H1 (cell line): ENCODE measurements at regions of chr6 and their contacts with region 1.

Region 1: DNA sequence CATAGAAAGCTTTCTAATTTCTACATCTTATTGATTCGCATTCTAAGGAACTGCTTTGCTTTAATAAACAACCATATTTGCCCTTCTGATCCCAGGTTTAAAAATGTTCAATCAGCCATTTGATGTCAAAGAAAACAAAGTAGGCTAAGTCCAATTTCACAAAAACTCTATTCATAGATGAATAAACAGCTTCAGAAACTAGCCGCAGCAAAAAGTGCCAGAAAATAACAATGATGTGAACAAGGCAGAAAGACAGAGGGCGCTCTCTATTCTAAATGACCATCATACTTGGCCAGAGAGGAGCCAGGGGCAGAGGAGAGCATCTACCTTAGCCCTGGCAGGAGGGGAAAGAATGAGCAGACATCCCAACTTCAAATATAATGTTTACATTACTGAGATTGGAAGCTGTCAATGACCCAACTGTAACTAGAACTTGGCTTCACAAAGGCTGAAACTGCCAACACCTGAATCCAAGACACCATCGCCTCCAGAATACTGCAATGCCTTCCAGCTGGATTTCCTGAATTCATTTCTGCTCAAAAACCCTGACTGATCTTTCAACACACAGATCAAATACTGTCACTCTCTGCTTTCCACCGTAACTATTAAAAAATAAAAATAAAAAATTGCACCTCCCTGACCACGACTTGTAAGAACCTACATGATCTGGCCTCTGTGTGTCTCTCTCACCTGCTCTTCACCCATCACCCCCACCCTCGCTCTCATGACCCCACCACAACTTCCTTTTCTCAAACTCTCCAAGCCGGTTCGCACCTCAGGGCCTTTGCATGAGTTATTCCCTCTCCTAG is 9.5 kb downstream of the CNKSR3 start:
- DNase-seq: no peak
- H3K4me3 ChIP-seq: no peak overlapping the region
- H3K27ac ChIP-seq: no peak overlapping the region
- H3K4me1 ChIP-seq: peaks cover 0 to 5% (median 2%) of the 10 kb centered on the region in 4 experiments; a peak in 2 of 7 replicates
- H3K27me3 ChIP-seq: peaks cover 8 to 28% (median 22%) of the 10 kb centered on the region in 4 experiments
- CTCF ChIP-seq: peak in 2 of 3 experiments; percentile 71; a peak in 3 of 4 replicates
- EP300 ChIP-seq: no peak
- POLR2A ChIP-seq: no peak
- RAD21 ChIP-seq: peak; percentile 59 to 71

Region 2: GRCh38 chr6:153966001-153966400 is 535.0 kb before region 1 on chr6:
- CTCF ChIA-PET with region 1: no interaction called
- POLR2A ChIA-PET with region 1: no interaction called
- DNase-seq: no peak
- H3K4me3 ChIP-seq: no peak overlapping the region
- H3K27ac ChIP-seq: no peak overlapping the region
- H3K4me1 ChIP-seq: no peaks in the 10 kb centered on the region
- H3K27me3 ChIP-seq: no peaks in the 10 kb centered on the region
- CTCF ChIP-seq: no peak
- EP300 ChIP-seq: no peak
- POLR2A ChIP-seq: no peak
- RAD21 ChIP-seq: no peak

Region 3: GRCh38 chr6:154478021-154478700 is 22.8 kb before region 1 on chr6:
- CTCF ChIA-PET with region 1: interaction called, 11 read pairs
- POLR2A ChIA-PET with region 1: no interaction called
- DNase-seq: no peak
- H3K4me3 ChIP-seq: no peak overlapping the region
- H3K27ac ChIP-seq: no peak overlapping the region
- H3K4me1 ChIP-seq: peaks cover 0 to 6% (median 0%) of the 10 kb centered on the region in 4 experiments; a peak in 3 of 7 replicates
- H3K27me3 ChIP-seq: no peaks in the 10 kb centered on the region
- CTCF ChIP-seq: no peak
- EP300 ChIP-seq: no peak
- POLR2A ChIP-seq: no peak
- RAD21 ChIP-seq: no peak

Region 4: DNA sequence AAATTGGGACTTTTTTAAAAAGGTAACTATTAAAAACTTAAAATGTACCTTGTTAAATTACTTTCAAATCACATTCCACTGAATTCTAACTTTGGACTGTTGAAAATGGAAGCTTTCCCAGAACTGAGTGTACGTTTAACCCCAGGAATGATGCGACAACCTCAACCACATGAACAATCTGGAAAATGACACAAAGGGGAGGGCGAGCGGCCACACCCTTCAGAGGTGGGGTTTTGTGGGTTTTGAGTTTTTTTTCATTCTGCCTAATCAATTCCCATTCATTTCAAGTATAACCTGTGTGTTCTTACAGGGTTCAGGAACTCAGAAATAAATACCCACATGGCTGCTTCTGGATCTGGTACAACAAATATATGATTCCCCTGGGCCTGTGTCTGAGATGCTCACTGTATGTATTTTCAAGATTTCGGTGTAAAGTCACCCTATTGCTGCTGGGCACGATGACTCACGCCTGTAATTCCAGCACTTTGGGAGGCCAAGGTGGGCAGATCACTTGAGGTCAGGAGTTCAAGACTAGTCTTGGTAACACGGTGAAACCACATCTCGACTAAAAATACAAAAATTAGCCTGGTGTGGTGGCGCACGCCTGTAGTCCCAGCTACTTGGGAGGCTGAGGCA is 12.1 kb before region 1 on chr6:
- CTCF ChIA-PET with region 1: interaction called, 29 read pairs
- POLR2A ChIA-PET with region 1: interaction called, 3 read pairs
- DNase-seq: no peak
- H3K4me3 ChIP-seq: no peak overlapping the region
- H3K27ac ChIP-seq: no peak overlapping the region
- H3K4me1 ChIP-seq: no peaks in the 10 kb centered on the region
- H3K27me3 ChIP-seq: no peaks in the 10 kb centered on the region
- CTCF ChIP-seq: no peak
- EP300 ChIP-seq: no peak
- POLR2A ChIP-seq: no peak
- RAD21 ChIP-seq: no peak

Region 5: GRCh38 chr6:156242206-156242605 is 1741.2 kb after region 1 on chr6:
- CTCF ChIA-PET with region 1: no interaction called
- POLR2A ChIA-PET with region 1: no interaction called
- DNase-seq: no peak
- H3K4me3 ChIP-seq: no peak overlapping the region
- H3K27ac ChIP-seq: no peak overlapping the region
- H3K4me1 ChIP-seq: peaks cover 0 to 8% (median 3%) of the 10 kb centered on the region in 4 experiments; a peak in 4 of 7 replicates
- H3K27me3 ChIP-seq: no peaks in the 10 kb centered on the region
- CTCF ChIP-seq: no peak
- EP300 ChIP-seq: no peak
- POLR2A ChIP-seq: no peak
- RAD21 ChIP-seq: no peak